Heart right ventricle (tissue), 16 donors: ENCODE measurements at regions of chr6 and their contacts with region 1.

Region 1: DNA sequence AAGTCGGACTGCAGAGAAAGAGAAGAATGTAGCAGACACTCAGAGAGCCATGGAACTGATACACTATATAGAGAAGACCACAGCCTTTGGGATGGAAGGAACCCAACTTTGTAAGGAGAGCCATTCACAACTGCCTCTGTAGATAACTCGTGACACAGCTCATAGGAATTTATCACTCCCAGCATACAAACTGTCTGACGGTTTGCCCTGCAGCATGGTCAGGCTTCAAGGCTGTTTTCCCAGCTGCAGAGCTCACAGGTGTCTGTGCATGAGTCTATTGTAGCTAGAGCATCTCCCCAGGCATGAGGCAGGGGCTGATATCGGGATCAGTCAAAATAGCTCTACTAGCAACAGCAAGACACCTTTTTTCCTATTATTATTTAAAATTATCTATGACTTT is 130.5 kb upstream of the DTNBP1 start:
- DNase-seq: peak in 1 of 2 donors; percentile 5
- ATAC-seq: peak in 7 of 8 donors; percentile 49 to 76 (median 65)
- H3K4me3 ChIP-seq: no peak overlapping the region
- H3K27ac ChIP-seq: peak overlapping the region in 6 of 10 donors; percentile 23 to 71 (median 48)
- H3K4me1 ChIP-seq: peaks cover 0 to 41% (median 19%) of the 10 kb centered on the region in 9 donors
- H3K27me3 ChIP-seq: no peaks in the 10 kb centered on the region
- CTCF ChIP-seq: no peak

Region 2: DNA sequence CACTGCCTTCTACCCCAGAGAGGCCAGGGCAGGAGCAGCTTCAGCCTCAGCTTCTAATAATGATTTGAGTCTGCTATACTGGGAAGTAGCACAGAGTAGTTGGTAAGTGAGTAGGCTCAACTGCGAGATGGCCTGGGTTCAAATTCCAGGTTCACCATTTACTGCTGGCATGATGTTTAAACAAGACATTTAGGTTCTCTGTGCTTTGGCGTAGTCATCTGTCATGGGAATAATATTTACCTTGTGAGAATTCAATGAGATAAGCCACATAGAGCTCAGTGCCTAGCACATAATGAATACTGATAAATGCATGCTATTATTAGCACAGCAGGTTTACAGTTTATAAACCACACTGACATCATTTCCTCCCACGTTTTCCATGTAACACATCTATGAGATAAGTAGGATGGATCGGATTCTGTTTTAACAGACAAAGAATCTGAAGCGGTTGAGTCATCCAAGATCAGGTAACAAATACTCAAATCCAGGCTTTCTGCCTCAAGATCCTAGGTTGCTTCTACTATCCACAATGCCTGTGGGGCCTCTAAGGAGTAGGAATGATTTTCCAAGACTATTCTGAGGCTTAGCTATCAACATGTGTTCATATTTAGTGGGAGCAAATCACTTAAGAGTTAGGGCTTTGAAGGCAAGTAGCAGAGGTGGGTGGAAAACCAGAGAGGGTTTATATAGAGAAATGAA is 57.6 kb before region 1 on chr6:
- intact Hi-C with region 1: loop called in 1 of 10 experiments (anchors 2 kb)
- DNase-seq: no peak
- ATAC-seq: peak in 3 of 8 donors; percentile 15 to 60 (median 39)
- H3K4me3 ChIP-seq: no peak overlapping the region
- H3K27ac ChIP-seq: no peak overlapping the region
- H3K4me1 ChIP-seq: peaks cover 0 to 11% (median 0%) of the 10 kb centered on the region in 9 donors
- H3K27me3 ChIP-seq: no peaks in the 10 kb centered on the region
- CTCF ChIP-seq: no peak